ENCODE measurements at regions of chr19 and their contacts with region 1.

Region 1: DNA sequence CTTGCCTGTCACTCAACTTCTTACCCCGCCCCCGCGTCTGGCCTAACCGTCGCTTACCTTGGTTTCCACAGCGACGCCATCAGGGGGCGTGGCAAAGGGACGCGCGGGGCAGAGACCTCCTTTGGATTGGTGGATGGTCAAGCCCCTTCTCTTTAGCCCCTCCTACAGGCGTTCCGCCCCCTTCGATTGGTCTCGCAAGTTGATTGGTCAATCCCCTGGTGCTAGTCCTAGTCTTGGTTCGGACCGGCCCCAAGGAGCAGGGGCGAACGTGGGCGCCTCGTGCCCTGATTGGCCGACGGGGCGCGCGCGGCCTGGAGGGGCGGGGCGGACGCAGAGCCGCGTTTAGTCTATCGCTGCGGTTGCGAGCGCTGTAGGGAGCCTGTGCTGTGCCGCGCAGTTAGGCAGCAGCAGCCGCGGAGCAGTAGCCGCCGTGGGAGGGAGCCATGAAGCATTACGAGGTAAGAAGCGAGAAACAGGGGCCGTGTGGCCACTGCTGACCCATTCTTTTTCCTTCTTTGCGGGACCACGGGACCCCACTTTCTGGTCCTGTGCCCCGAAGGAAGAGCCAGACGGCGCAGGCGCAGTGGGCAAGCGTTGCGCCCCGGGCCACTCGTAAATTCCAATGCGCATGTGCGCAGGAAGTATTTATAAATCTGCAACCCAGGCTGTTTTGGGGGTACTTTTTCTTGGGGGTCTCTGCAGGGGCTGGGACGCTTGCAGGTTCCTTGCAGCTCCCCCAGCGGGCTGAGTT is at the start of gene TECR:
- DNase-seq: peak; percentile 100
- H3K4me3 ChIP-seq: peak within 1 kb of the TSS; percentile 91
- H3K4me3 Mint-ChIP-seq: peak within 1 kb of the TSS; percentile 97
- H3K27ac Mint-ChIP-seq: peak within 1 kb of the TSS; percentile 93
- H3K4me1 ChIP-seq: peaks cover 10% of the 10 kb centered on the region; the same call in 1 of the 2 replicates
- H3K4me1 Mint-ChIP-seq: no peaks in the 10 kb centered on the region
- H3K27me3 ChIP-seq: no peaks in the 10 kb centered on the region
- H3K27me3 Mint-ChIP-seq: no peaks in the 10 kb centered on the region
- CTCF ChIP-seq: no peak
- total RNA-seq, gene TECR: 294 and 300 TPM in 2 replicates

Region 2: GRCh38 chr19:14496028-14496833 is 33.2 kb before region 1 on chr19 and contains the start of gene GIPC1:
- CTCF ChIA-PET with region 1: no interaction called
- POLR2A ChIA-PET with region 1: interaction called, 3 read pairs
- intact Hi-C with region 1: loop called (anchors 2 kb)
- DNase-seq: peak; percentile 99
- H3K4me3 ChIP-seq: peak within 1 kb of the TSS; percentile 93
- H3K4me3 Mint-ChIP-seq: peak within 1 kb of the TSS; percentile 80
- H3K27ac Mint-ChIP-seq: peak within 1 kb of the TSS; percentile 91
- H3K4me1 ChIP-seq: peaks cover 16% of the 10 kb centered on the region
- H3K4me1 Mint-ChIP-seq: peaks cover 21% of the 10 kb centered on the region
- H3K27me3 ChIP-seq: no peaks in the 10 kb centered on the region
- H3K27me3 Mint-ChIP-seq: no peaks in the 10 kb centered on the region
- CTCF ChIP-seq: no peak
- total RNA-seq, gene GIPC1: 98.7 and 105 TPM in 2 replicates

Region 3: DNA sequence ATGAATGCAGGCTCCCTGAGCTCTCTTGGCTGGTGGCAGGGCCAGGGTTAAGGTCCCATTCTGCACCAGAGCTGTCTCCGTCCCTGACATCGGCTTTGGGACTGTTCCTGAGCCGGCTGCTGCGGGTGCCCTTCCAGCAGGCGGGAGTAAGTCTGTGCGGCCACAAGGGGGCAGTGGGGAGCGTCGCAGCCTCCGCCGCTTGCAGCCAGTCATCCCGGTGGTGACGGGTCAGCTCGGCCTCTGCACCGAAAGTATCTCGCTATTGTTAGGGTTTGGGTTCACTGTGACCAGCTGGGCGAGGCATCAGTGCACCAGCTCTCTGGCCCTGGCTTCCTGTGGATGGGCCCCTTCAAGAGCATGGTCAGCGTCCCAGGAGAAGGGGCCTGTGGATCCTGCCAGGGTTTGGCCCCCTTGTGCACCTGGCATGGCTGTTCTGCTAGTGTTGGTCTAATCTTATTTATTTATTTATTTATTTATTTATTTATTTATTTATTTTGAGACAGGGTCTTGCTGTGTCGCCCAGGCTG is 27.3 kb after region 1 on chr19:
- CTCF ChIA-PET with region 1: no interaction called
- POLR2A ChIA-PET with region 1: interaction called, 5 read pairs
- intact Hi-C with region 1: loop called (anchors 1 kb)
- DNase-seq: peak in 1 of 2 experiments; percentile 65
- H3K4me3 ChIP-seq: no peak overlapping the region
- H3K4me3 Mint-ChIP-seq: no peak overlapping the region
- H3K27ac Mint-ChIP-seq: peak overlapping the region; percentile 28
- H3K4me1 ChIP-seq: no peaks in the 10 kb centered on the region
- H3K4me1 Mint-ChIP-seq: peaks cover 4% of the 10 kb centered on the region
- H3K27me3 ChIP-seq: no peaks in the 10 kb centered on the region
- H3K27me3 Mint-ChIP-seq: no peaks in the 10 kb centered on the region
- CTCF ChIP-seq: peak; percentile 67 to 83

Measured in Caco-2 (cell line).